Cardiac septum (tissue), 1 donor: ENCODE measurements at regions of chr18 and their contacts with region 1.

Region 1: GRCh38 chr18:13629841-13630715 is 96.3 kb downstream of the FAM210A start:
- DNase-seq: no peak

Region 2: GRCh38 chr18:13175754-13176210 is 454.3 kb before region 1 on chr18:
- intact Hi-C with region 1: no loop called
- DNase-seq: no peak

Region 3: GRCh38 chr18:13464432-13465123 is 165.5 kb before region 1 on chr18:
- intact Hi-C with region 1: no loop called
- DNase-seq: peak; percentile 88

Region 4: GRCh38 chr18:13558124-13558523 is 72.0 kb before region 1 on chr18:
- intact Hi-C with region 1: loop called (anchors 1 kb)
- DNase-seq: no peak